ENCODE measurements at regions of chr9 and their contacts with region 1.

Region 1: GRCh38 chr9:19456996-19457692 is 48.3 kb downstream of the ACER2 start:
- DNase-seq: peak; percentile 65
- H3K4me3 ChIP-seq: no peak overlapping the region
- H3K27ac ChIP-seq: no peak overlapping the region
- H3K4me1 ChIP-seq: no peaks in the 10 kb centered on the region
- H3K27me3 ChIP-seq: no peaks in the 10 kb centered on the region
- CTCF ChIP-seq: peak; percentile 72

Region 2: DNA sequence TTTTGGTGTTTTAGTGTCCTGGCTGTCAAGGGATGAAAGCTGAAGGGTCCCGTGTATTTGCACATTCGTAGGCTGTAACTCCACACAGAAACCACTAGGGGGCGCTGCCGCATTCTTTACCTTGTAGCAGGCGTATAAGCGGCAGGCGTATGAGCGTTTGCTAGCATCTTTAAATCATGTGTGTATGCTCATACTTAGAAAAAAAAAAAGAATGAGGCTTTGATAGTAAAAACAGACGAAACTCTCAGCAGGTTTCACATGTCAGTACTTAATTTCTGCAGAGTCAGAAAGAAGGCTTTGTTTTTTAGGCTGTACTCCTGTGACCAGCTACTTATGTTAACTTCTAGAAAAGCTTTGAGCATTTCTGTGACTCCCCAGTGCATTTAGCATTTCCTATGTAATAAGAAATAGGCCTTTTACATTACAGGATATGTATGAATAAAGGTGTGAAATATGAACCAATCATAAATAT is 1202.0 kb before region 1 on chr9:
- CTCF ChIA-PET with region 1: no interaction called
- POLR2A ChIA-PET with region 1: no interaction called
- intact Hi-C with region 1: loop called (anchors 10 kb)
- DNase-seq: peak; percentile 61
- H3K4me3 ChIP-seq: no peak overlapping the region
- H3K27ac ChIP-seq: no peak overlapping the region
- H3K4me1 ChIP-seq: no peaks in the 10 kb centered on the region
- H3K27me3 ChIP-seq: no peaks in the 10 kb centered on the region
- CTCF ChIP-seq: peak; percentile 72

Region 3: GRCh38 chr9:18791074-18791473 is 666.1 kb before region 1 on chr9:
- CTCF ChIA-PET with region 1: no interaction called
- POLR2A ChIA-PET with region 1: no interaction called
- intact Hi-C with region 1: loop called (anchors 5 kb)
- DNase-seq: peak; percentile 6
- H3K4me3 ChIP-seq: no peak overlapping the region
- H3K27ac ChIP-seq: no peak overlapping the region
- H3K4me1 ChIP-seq: no peaks in the 10 kb centered on the region
- H3K27me3 ChIP-seq: no peaks in the 10 kb centered on the region
- CTCF ChIP-seq: peak; percentile 46

Region 4: GRCh38 chr9:19048966-19049916 is 407.9 kb before region 1 on chr9 and contains the start of gene RRAGA:
- CTCF ChIA-PET with region 1: no interaction called
- POLR2A ChIA-PET with region 1: no interaction called
- intact Hi-C with region 1: loop called (anchors 2 kb)
- DNase-seq: peak; percentile 92
- H3K4me3 ChIP-seq: peak within 1 kb of the TSS; percentile 71
- H3K27ac ChIP-seq: peak within 1 kb of the TSS; percentile 89
- H3K4me1 ChIP-seq: no peaks in the 10 kb centered on the region
- H3K27me3 ChIP-seq: no peaks in the 10 kb centered on the region
- CTCF ChIP-seq: peak; percentile 66
- total RNA-seq, gene RRAGA: 33.0 and 34.9 TPM in 2 replicates

Region 5: GRCh38 chr9:19174127-19174912 is 282.8 kb before region 1 on chr9:
- CTCF ChIA-PET with region 1: no interaction called
- POLR2A ChIA-PET with region 1: no interaction called
- intact Hi-C with region 1: loop called (anchors 10 kb)
- DNase-seq: peak; percentile 73
- H3K4me3 ChIP-seq: no peak overlapping the region
- H3K27ac ChIP-seq: no peak overlapping the region
- H3K4me1 ChIP-seq: no peaks in the 10 kb centered on the region
- H3K27me3 ChIP-seq: no peaks in the 10 kb centered on the region
- CTCF ChIP-seq: peak; percentile 43; the same call in 1 of the 2 replicates

Region 6: DNA sequence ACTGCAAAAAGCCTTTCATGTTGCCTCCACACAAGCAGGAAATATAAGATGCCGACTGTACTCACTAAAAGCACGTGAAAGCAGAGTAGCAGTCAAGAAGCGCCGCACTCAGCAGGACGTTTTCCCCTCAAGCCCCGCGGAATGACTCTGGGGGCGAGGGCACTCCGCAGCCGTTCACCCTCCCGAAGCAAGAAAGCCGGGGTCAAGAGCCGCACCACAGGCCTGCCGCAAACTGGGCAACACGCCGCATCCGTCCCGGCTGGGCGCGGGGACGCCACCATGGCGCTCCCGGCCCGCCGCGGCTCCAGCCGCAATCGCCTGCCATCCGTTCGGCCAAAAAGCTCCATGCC is 77.5 kb before region 1 on chr9:
- CTCF ChIA-PET with region 1: no interaction called
- POLR2A ChIA-PET with region 1: no interaction called
- intact Hi-C with region 1: loop called (anchors 5 kb)
- DNase-seq: no peak
- H3K4me3 ChIP-seq: peak overlapping the region; percentile 77
- H3K27ac ChIP-seq: peak overlapping the region; percentile 92
- H3K4me1 ChIP-seq: no peaks in the 10 kb centered on the region
- H3K27me3 ChIP-seq: no peaks in the 10 kb centered on the region
- CTCF ChIP-seq: no peak

Region 7: DNA sequence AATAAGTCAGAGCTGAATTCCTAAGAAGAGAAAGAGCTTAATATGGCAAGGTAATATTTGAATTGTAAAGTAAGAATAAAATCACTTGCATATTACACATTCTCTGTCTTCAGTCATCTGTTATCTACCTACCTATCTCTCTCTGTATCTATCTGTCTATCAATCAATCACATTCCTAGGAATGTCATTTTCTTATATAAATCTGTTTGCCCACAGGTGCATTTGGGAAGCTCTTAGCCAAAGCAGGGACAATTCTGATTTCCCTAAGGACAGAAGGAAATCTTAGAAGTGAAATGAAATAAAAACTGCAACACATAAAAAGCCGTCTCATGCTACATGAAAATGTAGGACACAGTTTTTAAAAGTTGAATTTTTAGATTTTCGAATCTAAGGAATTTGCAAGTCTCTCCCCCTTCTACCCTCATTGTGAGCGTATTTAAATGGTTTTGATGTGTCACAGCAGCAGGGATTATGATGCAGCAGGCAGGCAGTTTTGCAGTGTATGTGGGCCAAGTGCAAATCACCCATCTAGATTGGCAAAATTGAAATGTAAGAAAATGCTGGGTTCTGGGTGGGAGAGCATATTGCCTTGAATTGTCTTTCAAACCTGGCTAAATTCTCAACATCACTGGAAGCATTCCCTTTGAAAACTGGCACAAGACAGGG is 107.4 kb after region 1 on chr9:
- CTCF ChIA-PET with region 1: no interaction called
- POLR2A ChIA-PET with region 1: no interaction called
- intact Hi-C with region 1: no loop called
- DNase-seq: no peak
- H3K4me3 ChIP-seq: no peak overlapping the region
- H3K27ac ChIP-seq: no peak overlapping the region
- H3K4me1 ChIP-seq: no peaks in the 10 kb centered on the region
- H3K27me3 ChIP-seq: no peaks in the 10 kb centered on the region
- CTCF ChIP-seq: no peak

Region 8: DNA sequence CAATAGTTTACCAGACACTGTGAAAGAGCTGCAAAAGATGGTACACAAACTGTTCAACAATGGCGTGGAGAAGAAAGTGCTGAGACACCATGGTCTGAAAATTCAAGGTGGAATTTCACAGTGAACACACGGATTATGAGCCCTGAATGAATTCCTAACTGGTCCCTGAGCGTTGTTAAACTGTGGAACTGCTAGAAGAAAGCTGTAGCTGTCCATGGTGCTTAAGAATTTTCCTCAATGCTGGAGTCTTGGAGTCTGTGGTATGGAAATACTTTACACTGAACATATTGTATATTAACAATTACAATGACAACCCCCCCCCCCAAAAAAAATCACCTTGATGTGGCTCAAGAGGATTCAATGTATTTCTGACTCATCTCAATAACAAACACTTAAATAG is 263.2 kb after region 1 on chr9:
- CTCF ChIA-PET with region 1: no interaction called
- POLR2A ChIA-PET with region 1: no interaction called
- intact Hi-C with region 1: no loop called
- DNase-seq: peak; percentile 25
- H3K4me3 ChIP-seq: no peak overlapping the region
- H3K27ac ChIP-seq: no peak overlapping the region
- H3K4me1 ChIP-seq: no peaks in the 10 kb centered on the region
- H3K27me3 ChIP-seq: no peaks in the 10 kb centered on the region
- CTCF ChIP-seq: no peak

Region 9: GRCh38 chr9:20189871-20190270 is 732.7 kb after region 1 on chr9:
- CTCF ChIA-PET with region 1: no interaction called
- POLR2A ChIA-PET with region 1: no interaction called
- intact Hi-C with region 1: no loop called
- DNase-seq: no peak
- H3K4me3 ChIP-seq: no peak overlapping the region
- H3K27ac ChIP-seq: no peak overlapping the region
- H3K4me1 ChIP-seq: no peaks in the 10 kb centered on the region
- H3K27me3 ChIP-seq: no peaks in the 10 kb centered on the region
- CTCF ChIP-seq: no peak

Measured in A673 (cell line).